ENCODE measurements at regions of chr2 and their contacts with region 1.

Region 1: DNA sequence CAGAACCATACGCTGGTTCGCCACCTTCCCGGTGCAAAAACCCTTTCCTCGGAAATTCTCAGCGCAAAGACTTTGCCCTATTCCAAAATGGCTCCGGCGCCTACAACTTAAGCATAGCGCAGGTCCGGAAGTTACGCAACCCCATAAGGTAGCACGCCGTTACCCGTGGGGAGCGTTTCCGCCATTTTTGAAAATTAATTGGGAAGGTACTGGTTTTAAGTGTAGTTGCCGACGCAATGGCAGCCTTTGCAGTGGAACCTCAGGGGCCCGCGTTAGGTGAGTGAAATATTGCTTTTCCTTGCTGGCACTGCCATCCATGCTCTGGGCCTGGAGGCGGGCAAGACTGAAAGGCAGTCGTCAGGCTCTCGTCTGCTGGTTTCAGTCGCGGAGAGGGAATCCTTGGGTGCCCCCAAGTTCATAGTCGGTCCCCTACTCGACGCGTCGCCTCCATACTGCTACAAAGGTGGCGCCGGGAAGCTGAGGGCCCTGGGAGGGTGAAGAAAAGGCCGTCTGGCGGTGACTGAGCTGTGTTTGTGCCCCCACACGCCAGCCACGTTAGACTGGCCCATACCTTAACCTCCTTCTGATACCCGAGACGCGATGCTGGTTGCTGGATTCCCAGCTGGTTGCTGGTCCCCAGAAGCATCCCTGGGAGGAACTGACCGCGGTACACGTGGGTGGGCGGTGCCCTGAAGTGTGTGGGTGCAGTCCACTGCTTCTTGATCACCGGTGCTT is at the start of gene NUP35:
- DNase-seq: peak; percentile 78
- H3K4me3 Mint-ChIP-seq: peak within 1 kb of the TSS; percentile 96
- H3K27ac Mint-ChIP-seq: peak within 1 kb of the TSS; percentile 98
- H3K4me1 Mint-ChIP-seq: peaks cover 29% of the 10 kb centered on the region
- H3K27me3 Mint-ChIP-seq: peaks cover 8% of the 10 kb centered on the region
- total RNA-seq, gene NUP35: 40.6 and 41.9 TPM in 2 replicates

Region 2: GRCh38 chr2:183078465-183079138 is 45.8 kb before region 1 on chr2 and contains the start of gene DUSP19:
- intact Hi-C with region 1: loop called (anchors 1 kb)
- DNase-seq: peak; percentile 78
- H3K4me3 Mint-ChIP-seq: peak within 1 kb of the TSS; percentile 91
- H3K27ac Mint-ChIP-seq: peak within 1 kb of the TSS; percentile 41
- H3K4me1 Mint-ChIP-seq: peaks cover 15% of the 10 kb centered on the region
- H3K27me3 Mint-ChIP-seq: peaks cover 7% of the 10 kb centered on the region
- total RNA-seq, gene DUSP19: 1.0 and 1.7 TPM in 2 replicates

Measured in activated T-helper 1 cell treated with anti-CD3 and anti-CD28 coated beads, Interleukin-12 subunit alpha, Interleukin-12 subunit beta, Interleukin-2, Interleukin-4 antibody, amounts not matched to agents 30 ng/mL and 10 ng/mL and 1 ng/mL, durations not matched to agents 14 hours and 24 hours and 36 hours (primary cell).